ENCODE measurements at regions of chr12 and their contacts with region 1.

Region 1: DNA sequence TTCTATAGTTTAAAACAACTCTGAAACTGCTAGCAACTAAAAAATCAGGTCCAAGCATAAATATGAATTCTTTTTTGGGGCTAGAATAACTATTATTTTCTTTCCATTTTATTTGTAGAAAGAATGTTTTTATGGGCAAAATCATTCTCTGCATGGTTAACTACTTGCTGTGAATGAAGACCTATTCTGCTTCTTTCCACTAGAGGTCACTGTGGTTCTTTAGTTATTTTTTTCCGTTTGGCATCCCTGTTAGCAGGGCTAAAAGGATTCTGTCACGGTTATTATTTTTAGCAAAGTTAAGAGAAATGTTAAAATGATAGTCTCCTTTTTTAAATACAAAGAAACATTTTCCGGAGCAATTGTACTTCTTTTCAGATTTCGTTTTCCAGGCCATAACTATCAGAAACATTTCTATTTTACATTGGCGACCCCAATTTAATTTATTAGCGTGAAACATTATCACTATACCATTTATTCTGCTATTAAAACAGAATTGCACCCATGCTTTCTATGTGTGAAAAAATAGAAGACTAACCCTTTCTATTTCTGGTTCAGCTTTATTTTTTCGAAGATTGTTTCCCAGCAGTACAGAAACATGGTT is 404.8 kb downstream of the ATP23 start:
- DNase-seq: peak; percentile 79
- ATAC-seq: peak; percentile 77
- H3K4me3 ChIP-seq: no peak overlapping the region
- H3K27ac ChIP-seq: peak overlapping the region; percentile 26
- H3K4me1 ChIP-seq: peaks cover 18% of the 10 kb centered on the region
- H3K27me3 ChIP-seq: no peaks in the 10 kb centered on the region
- CTCF ChIP-seq: peak; percentile 89

Region 2: GRCh38 chr12:58413794-58414193 is 67.7 kb after region 1 on chr12:
- CTCF ChIA-PET with region 1: no interaction called
- POLR2A ChIA-PET with region 1: no interaction called
- intact Hi-C with region 1: loop called (anchors 2 kb)
- DNase-seq: peak; percentile 93
- ATAC-seq: peak; percentile 84
- H3K4me3 ChIP-seq: peak overlapping the region; percentile 56
- H3K27ac ChIP-seq: peak overlapping the region; percentile 98
- H3K4me1 ChIP-seq: peaks cover 47% of the 10 kb centered on the region
- H3K27me3 ChIP-seq: no peaks in the 10 kb centered on the region
- CTCF ChIP-seq: no peak

Region 3: GRCh38 chr12:58443273-58443980 is 97.3 kb after region 1 on chr12:
- CTCF ChIA-PET with region 1: no interaction called
- POLR2A ChIA-PET with region 1: no interaction called
- intact Hi-C with region 1: loop called (anchors 2 kb)
- DNase-seq: peak; percentile 59
- ATAC-seq: peak; percentile 46; the same call in 1 of the 2 replicates
- H3K4me3 ChIP-seq: no peak overlapping the region
- H3K27ac ChIP-seq: no peak overlapping the region
- H3K4me1 ChIP-seq: 0 out of 2 replicates have a peak, but pooled peaks cover 6% of the 10 kb centered on the region
- H3K27me3 ChIP-seq: no peaks in the 10 kb centered on the region
- CTCF ChIP-seq: peak; percentile 72

Region 4: DNA sequence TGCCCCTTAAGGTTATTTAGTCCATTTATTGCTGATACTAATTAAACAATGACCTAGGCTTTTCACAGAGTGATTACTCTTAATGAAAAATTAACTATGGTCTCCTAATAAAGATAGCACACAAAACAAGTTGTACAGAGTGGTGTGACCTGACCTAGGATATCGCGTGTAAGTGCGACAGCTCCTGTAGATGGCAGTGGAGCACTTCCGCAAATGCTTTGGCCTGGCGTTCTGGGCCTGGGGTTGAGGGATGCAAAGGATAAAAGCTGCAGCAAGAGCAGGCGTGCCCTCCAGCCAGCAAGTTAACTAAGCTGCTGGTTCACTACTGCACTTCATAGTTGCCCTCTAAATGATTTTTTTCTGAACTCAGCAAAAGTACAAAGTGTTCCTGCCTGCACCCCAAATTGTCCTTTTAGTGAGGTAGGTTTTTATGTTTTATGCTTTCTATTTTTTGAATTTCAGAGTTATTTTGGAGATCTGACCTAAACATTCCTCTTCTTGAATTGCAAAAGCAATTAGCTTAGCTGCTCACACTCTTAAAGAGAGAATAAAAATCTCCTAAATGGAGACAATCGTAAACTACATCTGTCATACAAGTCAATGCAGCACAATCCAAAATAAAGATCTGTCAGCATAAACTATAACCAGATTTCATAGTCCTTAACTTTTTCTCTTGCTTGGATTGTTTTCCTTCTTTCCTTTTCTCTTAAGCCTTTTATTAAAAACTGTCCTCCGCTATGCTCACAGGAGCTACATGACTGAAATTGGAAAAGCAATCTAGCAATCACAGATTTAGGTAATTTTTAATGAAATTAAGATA is 194.6 kb after region 1 on chr12:
- CTCF ChIA-PET with region 1: interaction called, 4 read pairs
- POLR2A ChIA-PET with region 1: no interaction called
- intact Hi-C with region 1: loop called (anchors 1 kb)
- DNase-seq: peak; percentile 92
- ATAC-seq: peak; percentile 98
- H3K4me3 ChIP-seq: no peak overlapping the region
- H3K27ac ChIP-seq: peak overlapping the region; percentile 3; the same call in 1 of the 2 replicates
- H3K4me1 ChIP-seq: peaks cover 33% of the 10 kb centered on the region
- H3K27me3 ChIP-seq: no peaks in the 10 kb centered on the region
- CTCF ChIP-seq: peak; percentile 94

Region 5: DNA sequence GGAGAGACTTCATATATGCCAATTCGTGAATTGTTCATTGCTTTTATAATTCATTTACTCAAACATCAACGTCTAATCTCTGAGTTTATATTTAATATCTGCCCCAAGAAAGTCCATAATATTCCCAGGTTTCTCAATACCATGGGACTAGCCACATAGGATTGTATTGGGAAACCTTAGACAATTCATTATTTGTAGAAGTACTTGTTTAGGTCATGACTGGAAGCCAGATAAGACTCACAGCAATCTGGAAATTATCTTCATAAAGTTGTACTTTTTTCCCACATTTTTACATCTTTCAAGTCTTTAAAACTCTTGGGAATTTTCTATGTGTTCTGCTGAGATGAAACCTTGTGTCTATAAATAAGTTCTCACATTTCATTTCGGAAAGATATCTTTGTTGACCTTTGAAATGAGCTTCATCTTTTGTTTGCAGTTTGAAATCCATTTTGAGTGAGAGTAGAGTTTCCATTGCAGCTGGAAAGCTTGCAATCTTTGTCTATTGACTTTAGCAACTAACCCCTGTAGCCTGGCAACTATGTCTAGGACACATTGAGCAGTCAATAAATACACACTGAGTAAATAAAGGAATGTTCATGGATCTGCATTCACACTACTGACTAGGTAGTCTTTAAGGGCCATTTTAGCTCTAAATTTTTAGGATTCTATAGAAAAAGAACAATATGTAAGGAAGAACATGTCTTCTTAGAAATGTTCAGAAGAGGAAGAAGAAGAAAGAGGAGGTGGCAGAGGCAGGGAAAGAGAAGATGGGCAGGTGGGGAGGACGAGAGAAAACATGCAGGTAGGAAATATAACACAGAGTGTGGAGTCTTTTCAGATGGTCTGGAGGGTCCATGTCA is 419.8 kb after region 1 on chr12:
- CTCF ChIA-PET with region 1: no interaction called
- POLR2A ChIA-PET with region 1: no interaction called
- intact Hi-C with region 1: loop called (anchors 10 kb)
- DNase-seq: peak; percentile 38
- ATAC-seq: peak; percentile 71
- H3K4me3 ChIP-seq: no peak overlapping the region
- H3K27ac ChIP-seq: 0 out of 2 replicates have a peak overlapping the region, but pooled peaks have one; percentile 4
- H3K4me1 ChIP-seq: peaks cover 10% of the 10 kb centered on the region
- H3K27me3 ChIP-seq: no peaks in the 10 kb centered on the region
- CTCF ChIP-seq: no peak

Region 6: DNA sequence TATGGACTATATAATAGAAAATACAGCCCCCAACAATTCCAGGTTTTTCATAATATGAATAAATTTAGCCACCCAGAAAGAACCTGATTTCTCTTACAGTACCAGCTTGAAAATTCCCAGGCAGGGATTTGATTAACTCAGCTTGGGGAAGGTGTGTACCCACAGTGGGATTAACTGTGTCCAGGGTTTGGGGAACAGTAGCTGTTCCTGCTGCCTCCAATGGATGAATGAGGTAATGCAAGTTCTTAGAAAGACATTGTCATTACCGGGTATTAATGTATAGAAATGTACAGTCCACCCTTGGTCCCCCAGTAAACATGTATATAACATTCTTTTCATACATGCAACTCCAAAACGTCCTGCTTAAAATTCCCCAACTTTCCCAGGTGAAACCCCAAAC is 458.6 kb after region 1 on chr12:
- CTCF ChIA-PET with region 1: no interaction called
- POLR2A ChIA-PET with region 1: no interaction called
- intact Hi-C with region 1: no loop called
- DNase-seq: peak; percentile 40
- ATAC-seq: peak; percentile 46; the same call in 1 of the 2 replicates
- H3K4me3 ChIP-seq: no peak overlapping the region
- H3K27ac ChIP-seq: no peak overlapping the region
- H3K4me1 ChIP-seq: peaks cover 8% of the 10 kb centered on the region; the same call in 1 of the 2 replicates
- H3K27me3 ChIP-seq: no peaks in the 10 kb centered on the region
- CTCF ChIP-seq: peak; percentile 66

Region 7: GRCh38 chr12:58919231-58920101 is 573.3 kb after region 1 on chr12:
- CTCF ChIA-PET with region 1: no interaction called
- POLR2A ChIA-PET with region 1: no interaction called
- intact Hi-C with region 1: loop called (anchors 5 kb)
- DNase-seq: peak; percentile 48
- ATAC-seq: peak; percentile 37
- H3K4me3 ChIP-seq: peak overlapping the region; percentile 97
- H3K27ac ChIP-seq: peak overlapping the region; percentile 69
- H3K4me1 ChIP-seq: peaks cover 44% of the 10 kb centered on the region
- H3K27me3 ChIP-seq: no peaks in the 10 kb centered on the region
- CTCF ChIP-seq: no peak

Region 8: GRCh38 chr12:59149997-59150642 is 804.0 kb after region 1 on chr12:
- CTCF ChIA-PET with region 1: no interaction called
- POLR2A ChIA-PET with region 1: no interaction called
- intact Hi-C with region 1: loop called (anchors 5 kb)
- DNase-seq: peak; percentile 91
- ATAC-seq: peak; percentile 92
- H3K4me3 ChIP-seq: no peak overlapping the region
- H3K27ac ChIP-seq: no peak overlapping the region
- H3K4me1 ChIP-seq: no peaks in the 10 kb centered on the region
- H3K27me3 ChIP-seq: no peaks in the 10 kb centered on the region
- CTCF ChIP-seq: peak; percentile 99

Measured in PC-3 (cell line).